OCI-LY7 (cell line): ENCODE measurements at regions of chr16 and their contacts with region 1.

Region 1: DNA sequence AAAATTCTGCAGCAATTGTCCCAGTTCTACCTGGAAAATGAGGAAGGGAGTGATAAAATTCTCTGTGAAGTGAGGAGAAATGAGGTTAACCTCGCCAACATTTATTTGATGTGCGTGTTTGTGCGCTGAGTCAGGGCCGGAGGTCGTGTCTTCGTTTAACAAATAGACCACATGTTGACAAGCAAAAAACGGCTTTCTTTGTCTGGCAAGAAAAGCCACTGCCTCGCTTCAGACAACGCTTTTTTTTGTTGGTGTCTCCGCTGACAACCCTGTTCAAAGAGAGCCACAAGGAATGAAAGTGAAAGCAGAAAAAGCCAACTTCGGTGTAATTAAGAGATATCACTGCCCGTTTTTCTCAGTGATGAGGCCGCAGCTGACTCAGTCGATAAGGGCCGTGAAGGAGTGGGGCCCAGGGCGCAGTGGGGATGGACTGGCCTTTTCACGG is 510.6 kb downstream of the CDH13 start:
- DNase-seq: peak; percentile 93
- H3K4me3 ChIP-seq: peak overlapping the region; percentile 60
- H3K27ac ChIP-seq: peak overlapping the region; percentile 94
- H3K4me1 ChIP-seq: peaks cover 56% of the 10 kb centered on the region
- CTCF ChIP-seq: no peak

Region 2: GRCh38 chr16:83158320-83158957 is 21.1 kb after region 1 on chr16:
- CTCF ChIA-PET with region 1: no interaction called
- POLR2A ChIA-PET with region 1: no interaction called
- intact Hi-C with region 1: no loop called
- DNase-seq: no peak
- H3K4me3 ChIP-seq: no peak overlapping the region
- H3K27ac ChIP-seq: no peak overlapping the region
- H3K4me1 ChIP-seq: no peaks in the 10 kb centered on the region
- CTCF ChIP-seq: no peak

Region 3: DNA sequence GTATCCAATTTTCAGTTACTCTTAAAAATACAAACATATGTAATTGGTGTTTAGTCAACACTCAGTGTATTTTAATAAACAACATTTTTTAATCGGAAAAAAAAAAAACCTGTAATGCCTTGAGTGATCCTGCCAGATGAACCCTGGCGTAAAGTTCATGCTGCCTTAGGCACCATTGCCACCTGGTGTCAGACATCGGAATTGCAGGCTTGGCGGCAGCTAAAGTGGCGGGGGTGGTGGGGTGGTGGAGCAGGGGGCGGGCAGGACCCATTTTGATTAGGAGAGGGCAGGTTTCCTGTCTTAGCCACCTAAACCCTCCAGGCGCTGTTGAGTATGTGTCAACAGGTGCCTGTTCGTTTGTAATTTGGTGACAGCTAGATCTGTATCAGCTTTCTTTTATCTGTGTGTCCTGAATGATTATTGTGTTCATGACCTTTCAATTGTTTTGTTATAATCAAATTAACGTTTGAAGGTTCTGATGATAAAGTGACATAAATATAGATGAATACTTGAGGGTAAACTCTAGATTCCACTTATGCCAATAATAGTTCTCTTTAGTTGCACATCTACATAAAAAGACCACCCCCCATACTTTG is 78.2 kb after region 1 on chr16:
- CTCF ChIA-PET with region 1: no interaction called
- POLR2A ChIA-PET with region 1: no interaction called
- intact Hi-C with region 1: loop called (anchors 1 kb)
- DNase-seq: peak; percentile 75
- H3K4me3 ChIP-seq: no peak overlapping the region
- H3K27ac ChIP-seq: no peak overlapping the region
- H3K4me1 ChIP-seq: peaks cover 21% of the 10 kb centered on the region
- CTCF ChIP-seq: peak; percentile 92